Mucosa of descending colon (tissue), 3 donors: ENCODE measurements at regions of chr2 and their contacts with region 1.

Region 1: GRCh38 chr2:191030521-191031154 is 16.7 kb upstream of the STAT1 start:
- DNase-seq: peak in 1 of 3 donors; percentile 76
- ATAC-seq: peak; percentile 74
- H3K4me3 ChIP-seq: no peak overlapping the region
- H3K4me1 ChIP-seq: no peaks in the 10 kb centered on the region
- CTCF ChIP-seq: peak; percentile 15

Region 2: DNA sequence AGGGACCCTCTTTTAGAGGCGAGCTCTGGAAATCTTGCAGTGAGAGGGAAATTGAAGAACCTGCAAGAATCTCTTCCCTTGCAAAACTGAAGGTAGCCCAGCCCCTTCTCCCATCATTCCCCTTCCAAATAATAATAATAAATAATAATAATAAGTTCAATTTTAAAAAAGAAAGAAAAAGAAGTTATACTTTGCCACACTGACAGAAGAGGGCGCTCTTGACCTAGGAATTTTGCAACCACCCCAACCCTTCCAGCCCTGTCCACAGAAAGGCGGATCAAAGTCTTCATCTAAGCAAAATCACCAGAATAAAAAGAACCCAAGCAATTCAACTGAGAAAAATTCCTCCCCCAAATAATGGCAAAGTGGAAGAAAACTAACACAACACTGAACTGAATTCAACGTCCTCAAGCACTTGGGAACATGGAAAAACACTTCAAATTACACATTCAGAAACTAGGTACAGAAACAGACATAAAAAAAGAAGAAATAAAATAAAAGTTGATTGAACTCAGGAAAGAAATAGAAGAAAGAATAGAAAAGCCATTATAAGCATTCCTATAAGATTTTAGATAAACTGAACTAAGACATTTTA is 248.9 kb before region 1 on chr2:
- intact Hi-C with region 1: loop called in 1 of 2 experiments (anchors 5 kb)
- DNase-seq: peak in 1 of 3 donors; percentile 63
- ATAC-seq: peak; percentile 77
- H3K4me3 ChIP-seq: no peak overlapping the region
- H3K4me1 ChIP-seq: peaks cover 9% of the 10 kb centered on the region
- CTCF ChIP-seq: no peak

Region 3: DNA sequence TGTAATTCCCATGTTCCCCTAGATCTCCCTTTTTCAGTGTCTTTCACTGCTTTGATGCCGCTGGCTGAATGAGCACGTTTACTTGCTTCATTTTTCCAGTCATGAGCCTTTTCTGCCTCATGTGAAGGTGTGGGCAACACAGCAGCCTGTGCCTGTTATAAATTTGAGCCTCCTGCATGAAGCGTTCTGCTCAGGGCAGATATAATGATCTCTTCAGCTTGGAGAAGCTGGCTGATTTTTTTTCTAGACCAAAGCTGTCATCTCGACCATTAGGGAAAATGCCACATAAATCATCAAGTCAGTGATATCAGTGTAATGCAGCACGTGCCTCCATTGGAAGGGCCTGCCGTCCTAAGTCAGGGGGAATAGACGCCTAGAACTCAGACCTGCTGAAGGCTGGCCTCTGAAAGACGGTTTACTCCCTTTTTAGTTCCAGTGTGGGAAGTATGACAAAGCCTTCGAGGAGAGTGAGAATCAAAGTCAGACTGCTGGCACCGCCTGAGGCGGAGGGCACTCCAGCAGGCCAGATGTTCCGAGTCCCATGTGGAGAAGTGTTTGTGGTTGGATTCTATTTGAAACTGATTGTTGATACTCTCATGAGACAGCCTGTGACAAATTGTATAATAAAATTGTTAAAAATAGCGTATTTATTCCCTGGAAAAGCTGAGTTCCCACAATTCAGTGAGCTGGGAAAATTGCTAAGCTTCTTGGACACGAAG is 411.0 kb after region 1 on chr2:
- intact Hi-C with region 1: no loop called
- DNase-seq: no peak
- ATAC-seq: no peak
- H3K4me3 ChIP-seq: no peak overlapping the region
- H3K4me1 ChIP-seq: no peaks in the 10 kb centered on the region
- CTCF ChIP-seq: no peak